ENCODE measurements at regions of chrX and their contacts with region 1.

Region 1: GRCh38 chrX:13487731-13488523 is 81.5 kb upstream of the EGFL6 start:
- DNase-seq: peak; percentile 60
- CTCF ChIP-seq: peak; percentile 65

Region 2: GRCh38 chrX:12814420-12814819 is 673.5 kb before region 1 on chrX:
- in situ Hi-C with region 1: loop called (anchors 25 kb)
- DNase-seq: peak; percentile 64
- CTCF ChIP-seq: peak; percentile 74

Region 3: DNA sequence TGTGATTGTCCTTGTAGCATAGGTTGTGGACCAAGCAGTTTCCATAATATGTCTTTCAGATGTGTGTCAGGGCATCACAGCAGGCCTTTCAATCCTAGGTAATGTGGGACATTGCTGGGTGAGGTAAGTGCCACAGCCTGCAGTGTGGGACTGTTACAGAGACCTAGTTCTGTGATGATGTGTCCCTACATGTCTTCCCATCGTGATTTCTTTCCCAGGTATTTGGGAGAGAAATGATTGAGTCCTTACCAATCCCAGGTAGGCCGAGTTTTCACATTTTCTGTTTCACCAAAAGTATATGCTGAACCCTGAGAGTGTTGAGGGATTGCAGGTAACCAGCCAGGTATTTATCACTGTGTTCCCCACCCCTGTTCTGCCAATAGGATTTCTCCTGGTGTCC is 157.5 kb before region 1 on chrX:
- in situ Hi-C with region 1: no loop called
- DNase-seq: no peak
- CTCF ChIP-seq: no peak

Measured in GM13977 (cell line).